BJ (cell line): ENCODE measurements at regions of chr19 and their contacts with region 1.

Region 1: DNA sequence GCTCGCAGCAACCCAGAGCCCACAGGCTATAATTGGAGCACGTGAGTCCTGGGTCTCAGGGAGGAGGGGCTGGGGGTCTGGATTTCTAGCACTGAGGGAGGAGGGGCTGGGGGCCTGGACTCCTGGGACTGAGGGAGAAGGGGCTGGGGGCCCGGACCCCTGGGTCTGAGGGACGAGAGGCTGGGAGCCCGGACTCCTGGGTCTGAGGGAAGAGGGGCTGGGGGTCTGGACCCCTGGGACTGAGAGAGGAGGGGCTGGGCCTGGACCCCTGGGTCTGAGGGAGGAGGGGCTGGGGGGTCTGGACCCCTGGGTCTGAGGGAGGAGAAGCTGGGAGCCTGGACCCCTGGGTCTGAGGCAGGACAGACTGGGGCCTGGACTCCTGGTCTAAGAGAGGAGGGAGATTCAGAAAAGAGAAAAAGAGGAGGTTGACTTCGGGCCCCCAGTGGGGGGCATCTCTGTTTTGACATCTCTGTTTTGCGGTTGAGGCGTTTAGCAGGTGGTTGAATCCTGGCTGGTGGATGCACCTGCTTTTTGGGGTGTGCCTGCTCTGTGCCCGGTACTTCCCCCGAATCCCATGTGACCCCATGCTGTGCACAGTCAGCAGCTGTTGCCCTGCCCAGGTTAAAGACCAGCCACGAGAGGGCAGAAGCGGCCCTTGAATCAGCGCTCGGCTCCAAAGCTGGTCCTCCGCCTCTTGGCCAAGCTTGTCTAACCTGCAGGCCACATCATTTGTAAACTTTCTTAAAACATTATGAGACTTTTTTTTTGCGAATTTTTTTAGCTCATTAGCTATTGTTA is 10.5 kb downstream of the PVR start:
- DNase-seq: no peak
- H3K4me3 ChIP-seq: no peak overlapping the region
- H3K27me3 ChIP-seq: no peaks in the 10 kb centered on the region
- CTCF ChIP-seq: peak; percentile 50

Region 2: DNA sequence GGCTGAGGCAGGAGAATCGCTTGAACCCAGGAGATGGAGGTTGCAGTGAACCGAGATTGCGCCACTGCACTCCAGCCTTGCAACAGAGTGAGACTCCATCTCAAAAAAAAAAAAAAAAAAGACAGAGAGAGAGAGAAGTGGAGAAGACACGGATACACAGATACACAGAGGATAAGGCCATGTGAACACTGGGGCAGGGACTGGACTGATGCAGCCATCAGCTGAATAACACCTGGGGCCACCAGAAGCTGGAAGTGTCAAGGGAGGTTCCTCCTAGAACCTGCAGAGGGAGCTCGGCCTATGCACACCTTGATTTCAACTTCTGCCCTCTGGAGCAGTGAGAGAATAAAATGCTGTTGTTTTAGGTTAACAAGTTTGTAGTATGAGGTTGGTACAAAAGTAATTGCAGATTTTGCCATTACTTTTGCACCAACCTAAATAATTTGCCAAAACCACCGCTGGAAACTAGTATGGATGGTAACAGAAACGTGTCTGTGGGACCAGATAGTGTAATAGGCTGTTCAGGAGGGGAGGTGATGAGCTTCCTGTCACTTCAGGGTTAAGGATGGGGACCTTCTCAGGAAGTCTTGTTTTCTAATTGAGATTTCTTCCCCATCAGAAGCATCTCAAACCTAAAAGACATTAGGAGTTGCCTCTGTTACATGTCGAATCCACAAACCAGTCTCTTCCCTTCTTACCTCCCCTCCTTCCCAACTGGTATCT is 77.2 kb before region 1 on chr19:
- CTCF ChIA-PET with region 1: interaction called, 82 read pairs
- POLR2A ChIA-PET with region 1: no interaction called
- DNase-seq: no peak
- H3K4me3 ChIP-seq: no peak overlapping the region
- H3K27me3 ChIP-seq: no peaks in the 10 kb centered on the region
- CTCF ChIP-seq: peak; percentile 70

Region 3: DNA sequence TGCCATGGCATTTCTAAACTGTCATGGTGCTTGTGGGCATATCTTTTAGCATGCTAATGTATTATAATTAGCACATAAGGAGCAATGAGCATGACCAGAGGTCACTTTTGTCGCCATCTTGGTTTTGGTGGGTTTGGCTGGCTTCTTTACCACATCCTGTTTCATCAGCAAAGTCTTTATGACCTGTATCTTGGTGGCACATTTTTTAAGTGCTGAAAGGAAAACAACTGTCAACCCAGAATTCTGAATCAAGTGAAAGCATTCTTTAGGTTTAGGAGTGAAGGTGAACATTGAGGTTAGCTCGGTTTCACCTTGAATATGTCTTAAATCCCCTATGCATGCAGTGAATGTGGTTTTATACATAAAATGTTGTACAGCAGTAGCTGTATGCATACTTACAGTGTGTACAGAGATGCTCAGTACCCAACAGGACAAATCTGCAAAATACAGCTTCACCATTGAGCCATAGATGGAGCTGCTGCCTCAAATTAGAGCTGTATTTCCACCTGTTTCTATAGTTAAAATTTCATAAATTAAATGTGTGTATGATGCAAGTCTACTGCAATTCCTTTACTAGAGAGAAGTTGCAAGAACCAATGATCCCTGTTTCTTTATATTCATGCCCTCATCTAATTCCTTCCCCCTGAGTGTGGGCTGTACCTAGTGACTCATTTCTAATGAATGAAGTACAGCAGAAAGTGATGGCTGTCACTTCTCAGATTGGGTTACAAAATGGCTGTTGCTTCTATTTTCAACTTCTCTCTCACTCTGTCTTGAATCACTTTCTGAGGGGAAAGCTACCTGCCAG is 66.0 kb before region 1 on chr19:
- CTCF ChIA-PET with region 1: interaction called, 28 read pairs
- POLR2A ChIA-PET with region 1: no interaction called
- DNase-seq: peak; percentile 75
- H3K4me3 ChIP-seq: no peak overlapping the region
- H3K27me3 ChIP-seq: no peaks in the 10 kb centered on the region
- CTCF ChIP-seq: peak; percentile 41

Region 4: DNA sequence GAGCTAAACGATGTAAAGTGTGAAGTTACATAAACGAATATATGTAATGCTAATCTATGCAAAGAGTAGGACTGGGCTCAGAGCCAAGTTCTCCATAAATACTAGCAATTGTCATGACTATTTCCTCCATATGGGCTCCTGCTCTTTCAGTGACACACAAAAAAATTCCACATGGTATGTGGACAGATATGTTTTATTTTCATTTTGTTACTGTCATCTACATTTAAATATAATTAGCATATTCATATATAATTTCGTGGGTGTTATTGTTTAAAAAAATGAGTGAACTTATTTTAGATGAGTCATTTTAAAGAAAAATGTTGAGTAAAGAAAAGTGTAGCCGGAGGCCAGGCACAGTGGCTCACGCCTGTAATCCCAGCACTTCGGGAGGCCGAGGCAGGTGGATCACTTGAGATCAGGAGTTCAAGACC is 45.8 kb before region 1 on chr19:
- CTCF ChIA-PET with region 1: interaction called, 24 read pairs
- POLR2A ChIA-PET with region 1: no interaction called
- DNase-seq: no peak
- H3K4me3 ChIP-seq: no peak overlapping the region
- H3K27me3 ChIP-seq: no peaks in the 10 kb centered on the region
- CTCF ChIP-seq: no peak

Region 5: DNA sequence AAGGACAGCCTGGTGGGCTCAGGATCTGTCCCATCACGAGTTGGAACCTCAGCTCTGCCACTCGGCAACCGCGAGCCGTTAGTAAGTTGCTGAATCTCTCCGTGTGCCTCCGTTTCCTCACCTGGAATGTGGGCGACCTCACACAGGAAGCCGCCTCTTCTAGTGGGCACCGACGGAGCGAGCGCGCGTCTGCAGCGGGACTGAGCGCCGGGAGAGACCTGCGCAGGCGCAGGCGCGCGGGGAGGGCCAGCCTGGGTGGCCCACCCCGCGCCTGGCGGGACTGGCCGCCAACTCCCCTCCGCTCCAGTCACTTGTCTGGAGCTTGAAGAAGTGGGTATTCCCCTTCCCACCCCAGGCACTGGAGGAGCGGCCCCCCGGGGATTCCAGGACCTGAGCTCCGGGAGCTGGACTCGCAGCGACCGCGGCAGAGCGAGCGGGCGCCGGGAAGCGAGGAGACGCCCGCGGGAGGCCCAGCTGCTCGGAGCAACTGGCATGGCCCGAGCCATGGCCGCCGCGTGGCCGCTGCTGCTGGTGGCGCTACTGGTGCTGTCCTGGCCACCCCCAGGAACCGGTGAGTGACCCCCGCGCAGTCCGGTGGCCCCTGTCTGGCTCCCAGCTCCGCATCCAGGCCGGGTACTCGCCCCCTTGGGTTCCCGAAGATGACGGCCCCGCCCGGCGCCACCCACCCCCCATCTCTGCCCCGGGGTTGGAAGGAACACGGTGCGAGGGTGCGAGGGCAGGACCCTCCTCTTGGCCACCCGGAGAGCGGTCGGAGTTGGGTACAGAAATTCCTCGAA is 10.4 kb before region 1 on chr19 and contains the start of gene PVR:
- CTCF ChIA-PET with region 1: interaction called, 22 read pairs
- POLR2A ChIA-PET with region 1: no interaction called
- DNase-seq: no peak
- H3K4me3 ChIP-seq: peak within 1 kb of the TSS; percentile 93
- H3K27me3 ChIP-seq: no peaks in the 10 kb centered on the region
- CTCF ChIP-seq: peak; percentile 19; the same call in 1 of the 2 replicates
- polyA plus RNA-seq, gene PVR: 84.4 and 129 TPM in 2 replicates